Esophagus muscularis mucosa (tissue), 4 donors: ENCODE measurements at regions of chr7 and their contacts with region 1.

Region 1: GRCh38 chr7:27095897-27096767 is at the start of gene HOXA1:
- DNase-seq: peak; percentile 98
- H3K4me3 ChIP-seq: peak within 1 kb of the TSS; percentile 79 to 100 (median 96)
- H3K27ac ChIP-seq: peak within 1 kb of the TSS; percentile 96 to 100 (median 99)
- H3K4me1 ChIP-seq: peaks cover 26 to 54% (median 45%) of the 10 kb centered on the region in 4 donors
- H3K27me3 ChIP-seq: peaks cover 0 to 8% (median 0%) of the 10 kb centered on the region in 4 donors
- CTCF ChIP-seq: no peak
- EP300 ChIP-seq: no peak
- POLR2A ChIP-seq: peak; percentile 56
- total RNA-seq, gene HOXA1: 0.17 to 1.4 (median 0.56) TPM

Region 2: DNA sequence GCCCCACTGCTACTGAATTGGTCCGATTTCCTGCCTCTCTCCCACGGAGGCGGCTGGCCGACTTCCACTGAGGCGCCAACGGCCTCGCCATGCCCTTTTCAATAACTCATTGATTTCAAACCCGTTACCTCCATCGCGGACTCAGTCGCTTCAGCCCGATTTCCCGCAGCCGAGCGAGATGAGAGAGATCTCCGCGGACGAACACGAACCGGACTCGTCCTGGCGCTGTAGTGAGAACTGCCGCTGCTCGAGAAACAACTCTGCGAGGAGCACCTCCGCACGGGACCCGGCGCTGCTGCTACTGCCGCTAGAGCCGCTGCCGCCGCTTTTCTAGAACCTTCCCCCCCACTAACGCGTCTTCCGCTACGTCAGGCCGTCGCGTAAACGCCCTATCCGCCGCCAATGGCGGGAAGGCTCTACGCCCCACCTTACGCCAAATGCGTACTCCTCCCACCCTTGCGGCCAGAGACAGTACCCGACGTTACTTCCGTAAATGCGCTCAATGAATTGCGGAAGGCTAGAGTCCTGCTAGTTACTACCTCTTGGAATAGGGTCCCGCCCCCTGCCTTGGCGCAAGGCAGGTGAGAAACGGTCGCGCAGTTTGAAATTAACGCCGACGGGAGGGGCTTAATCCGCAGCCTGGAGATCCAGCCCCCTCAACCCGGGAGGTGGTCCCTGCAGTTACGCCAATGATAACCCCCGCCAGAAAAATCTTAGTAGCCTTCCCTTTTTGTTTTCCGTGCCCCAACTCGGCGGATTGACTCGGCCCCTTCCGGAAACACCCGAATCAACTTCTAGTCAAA is 895.5 kb before region 1 on chr7 and contains the start of gene HNRNPA2B1:
- intact Hi-C with region 1: loop called (anchors 5 kb)
- DNase-seq: peak; percentile 99
- H3K4me3 ChIP-seq: peak within 1 kb of the TSS; percentile 95 to 98 (median 96)
- H3K27ac ChIP-seq: peak within 1 kb of the TSS; percentile 99 to 100 (median 100)
- H3K4me1 ChIP-seq: peaks cover 46 to 56% (median 55%) of the 10 kb centered on the region in 4 donors
- H3K27me3 ChIP-seq: no peaks in the 10 kb centered on the region
- CTCF ChIP-seq: peak in 1 of 3 experiments; percentile 19
- EP300 ChIP-seq: peak; percentile 44
- POLR2A ChIP-seq: peak; percentile 100
- total RNA-seq, gene HNRNPA2B1: 158 to 220 (median 202) TPM

Region 3: DNA sequence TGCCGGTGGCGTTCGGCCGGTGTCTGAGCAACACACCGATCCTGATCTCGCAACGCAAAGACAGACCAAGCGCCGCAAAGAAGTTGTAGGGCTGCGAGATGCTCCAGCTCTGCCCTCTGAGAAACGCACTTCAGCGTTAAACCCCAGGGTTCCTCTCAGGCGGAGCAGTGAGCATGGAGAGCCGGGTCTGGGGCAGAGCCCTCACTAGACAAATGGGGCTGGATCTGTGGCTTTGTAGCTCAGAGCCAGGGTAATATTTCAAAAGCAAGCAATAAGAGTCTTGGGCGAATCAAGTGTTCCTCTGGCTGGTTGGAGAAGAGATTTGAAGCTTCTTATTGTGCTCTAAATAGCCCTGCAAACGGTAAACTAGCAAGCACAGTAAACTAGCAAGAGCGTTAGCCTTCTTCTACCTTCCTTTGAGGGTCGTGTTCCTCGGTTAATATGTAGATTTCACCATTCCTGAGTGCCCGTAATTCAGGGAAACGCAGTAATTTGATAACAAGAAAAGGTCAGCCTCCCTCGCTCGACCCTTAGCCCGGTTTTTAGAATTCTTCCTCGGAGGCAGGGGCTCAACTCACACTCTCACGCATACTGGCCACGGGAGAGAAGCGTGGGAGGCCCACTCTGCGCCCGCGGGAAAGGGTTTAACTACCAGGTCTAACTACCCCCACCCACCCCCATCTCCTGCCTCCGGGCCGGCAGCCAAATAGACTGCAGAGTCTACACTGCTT is 238.5 kb before region 1 on chr7:
- intact Hi-C with region 1: loop called (anchors 5 kb)
- DNase-seq: no peak
- H3K4me3 ChIP-seq: peak overlapping the region; percentile 43 to 50 (median 44)
- H3K27ac ChIP-seq: peak overlapping the region; percentile 76 to 96 (median 84)
- H3K4me1 ChIP-seq: peaks cover 0 to 73% (median 61%) of the 10 kb centered on the region in 4 donors
- H3K27me3 ChIP-seq: no peaks in the 10 kb centered on the region
- CTCF ChIP-seq: no peak
- EP300 ChIP-seq: no peak
- POLR2A ChIP-seq: no peak

Region 4: GRCh38 chr7:27031289-27032172 is 64.6 kb before region 1 on chr7:
- intact Hi-C with region 1: loop called (anchors 5 kb)
- DNase-seq: no peak
- H3K4me3 ChIP-seq: peak overlapping the region in 2 of 4 donors; percentile 12 to 16
- H3K27ac ChIP-seq: peak overlapping the region; percentile 67 to 70 (median 68)
- H3K4me1 ChIP-seq: peaks cover 2 to 20% (median 15%) of the 10 kb centered on the region in 4 donors
- H3K27me3 ChIP-seq: no peaks in the 10 kb centered on the region
- CTCF ChIP-seq: no peak
- EP300 ChIP-seq: no peak
- POLR2A ChIP-seq: no peak

Region 5: GRCh38 chr7:27134392-27134791 is 38.3 kb after region 1 on chr7:
- intact Hi-C with region 1: loop called (anchors 2 kb)
- DNase-seq: no peak
- H3K4me3 ChIP-seq: no peak overlapping the region
- H3K27ac ChIP-seq: peak overlapping the region; percentile 96 to 99 (median 99)
- H3K4me1 ChIP-seq: peaks cover 0 to 83% (median 80%) of the 10 kb centered on the region in 4 donors
- H3K27me3 ChIP-seq: peaks cover 0 to 4% (median 0%) of the 10 kb centered on the region in 4 donors
- CTCF ChIP-seq: no peak
- EP300 ChIP-seq: no peak
- POLR2A ChIP-seq: no peak

Region 6: GRCh38 chr7:27143023-27143949 is 47.2 kb after region 1 on chr7 and contains the start of gene HOXA5:
- intact Hi-C with region 1: loop called (anchors 2 kb)
- DNase-seq: peak; percentile 94
- H3K4me3 ChIP-seq: peak within 1 kb of the TSS; percentile 83 to 96 (median 90)
- H3K27ac ChIP-seq: peak within 1 kb of the TSS; percentile 96 to 99 (median 99)
- H3K4me1 ChIP-seq: peaks cover 19 to 43% (median 41%) of the 10 kb centered on the region in 4 donors
- H3K27me3 ChIP-seq: peaks cover 0 to 42% (median 13%) of the 10 kb centered on the region in 4 donors
- CTCF ChIP-seq: peak; percentile 95 to 98 (median 95)
- EP300 ChIP-seq: peak; percentile 66
- POLR2A ChIP-seq: peak; percentile 25
- total RNA-seq, gene HOXA5: 7.8 to 24.8 (median 14.7) TPM